Sigmoid colon (tissue), 7 donors: ENCODE measurements at regions of chr9 and their contacts with region 1.

Region 1: GRCh38 chr9:120936011-120936763 is 9.6 kb upstream of the TRAF1 start:
- DNase-seq: peak; percentile 97
- H3K4me3 ChIP-seq: peak overlapping the region in 3 of 4 donors; percentile 25 to 35 (median 28)
- H3K27ac ChIP-seq: peak overlapping the region; percentile 85 to 91 (median 88)
- H3K4me1 ChIP-seq: peaks cover 0 to 55% (median 43%) of the 10 kb centered on the region in 4 donors
- H3K27me3 ChIP-seq: no peaks in the 10 kb centered on the region
- CTCF ChIP-seq: peak; percentile 88 to 92 (median 90)
- EP300 ChIP-seq: peak in 1 of 4 donors; percentile 19
- POLR2A ChIP-seq: no peak

Region 2: DNA sequence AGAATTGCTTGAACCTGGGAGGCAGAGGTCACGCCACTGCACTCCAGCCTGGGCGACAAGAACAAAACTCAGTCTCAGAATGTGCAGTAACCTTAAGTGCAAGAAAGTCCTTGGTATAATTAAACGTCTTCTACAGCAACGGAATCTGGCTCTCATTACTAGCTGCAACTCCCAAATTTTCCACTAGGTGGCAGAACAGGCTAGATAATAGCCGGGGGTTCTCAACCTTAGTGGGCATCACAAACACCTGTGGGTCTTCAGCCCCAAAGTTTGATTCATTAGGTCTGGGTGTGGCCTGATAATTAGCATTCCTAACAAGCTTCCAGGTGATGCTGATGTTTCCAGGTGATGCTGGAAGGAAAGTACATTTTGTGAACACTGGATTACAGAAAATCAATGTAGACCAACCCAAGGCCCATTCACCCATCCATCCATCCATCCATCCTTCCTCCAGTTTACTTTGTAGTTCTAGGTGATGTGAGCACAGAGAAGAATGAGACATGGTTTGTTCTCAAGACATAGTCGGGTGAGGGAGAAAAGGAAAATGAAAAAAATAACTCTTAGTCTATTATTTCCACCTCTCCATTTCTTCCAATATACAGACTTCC is 180.3 kb before region 1 on chr9:
- intact Hi-C with region 1: loop called (anchors 1 kb)
- DNase-seq: no peak
- H3K4me3 ChIP-seq: no peak overlapping the region
- H3K27ac ChIP-seq: peak overlapping the region in 1 of 4 donors; percentile 24
- H3K4me1 ChIP-seq: peaks cover 0 to 12% (median 7%) of the 10 kb centered on the region in 4 donors
- H3K27me3 ChIP-seq: no peaks in the 10 kb centered on the region
- CTCF ChIP-seq: peak; percentile 65 to 92 (median 86)
- EP300 ChIP-seq: no peak
- POLR2A ChIP-seq: no peak

Region 3: DNA sequence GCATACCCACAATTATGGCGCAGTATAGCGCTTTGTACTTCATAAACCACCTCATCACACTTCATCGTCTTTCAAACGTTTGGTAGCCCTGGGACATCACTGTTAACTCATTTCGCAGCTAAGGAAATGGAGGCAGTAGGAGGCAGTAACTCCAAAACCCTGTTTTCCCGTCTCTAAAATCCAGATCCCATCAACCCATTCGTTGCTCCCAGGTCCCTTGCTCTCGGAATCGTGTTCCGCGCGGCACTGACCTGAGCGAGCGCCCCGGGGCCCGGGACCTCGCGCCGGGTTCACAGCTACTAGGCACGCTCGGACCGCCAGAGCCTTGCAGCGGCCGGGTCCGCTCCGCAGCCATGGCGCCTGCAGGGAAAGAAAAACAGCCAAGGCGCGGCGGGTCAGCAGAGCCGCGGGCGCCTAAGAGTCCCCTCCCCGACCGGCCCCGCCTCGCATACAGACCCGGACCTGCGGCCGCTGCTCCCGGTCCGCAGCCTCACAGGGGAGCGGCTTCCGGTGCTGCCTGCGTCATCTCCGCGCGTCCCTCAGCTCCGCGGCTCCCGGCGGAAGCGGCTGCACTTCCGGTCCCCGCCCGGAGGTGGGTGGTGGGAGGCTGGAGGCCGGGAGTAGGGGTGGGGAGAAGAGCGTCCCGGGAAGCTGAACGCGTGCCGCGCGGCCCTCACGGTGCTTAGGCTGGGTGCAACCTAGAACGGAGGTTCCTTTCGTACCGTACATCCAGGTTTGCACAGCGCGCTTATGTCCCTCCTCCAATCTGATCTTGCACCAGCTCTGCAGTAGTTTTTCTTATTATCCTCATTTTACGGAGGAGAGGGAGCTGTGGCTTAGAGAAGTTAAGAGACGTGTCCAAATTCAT is 143.1 kb before region 1 on chr9 and contains the start of gene FBXW2:
- intact Hi-C with region 1: loop called (anchors 2 kb)
- DNase-seq: peak; percentile 95
- H3K4me3 ChIP-seq: peak within 1 kb of the TSS; percentile 69 to 95 (median 90)
- H3K27ac ChIP-seq: peak within 1 kb of the TSS; percentile 86 to 94 (median 91)
- H3K4me1 ChIP-seq: peaks cover 0 to 39% (median 30%) of the 10 kb centered on the region in 4 donors
- H3K27me3 ChIP-seq: no peaks in the 10 kb centered on the region
- CTCF ChIP-seq: peak in 1 of 4 experiments; percentile 31
- EP300 ChIP-seq: peak in 1 of 4 donors; percentile 35
- POLR2A ChIP-seq: peak; percentile 91 to 94
- total RNA-seq, gene FBXW2: 30.9 to 61.8 (median 36.3) TPM

Region 4: GRCh38 chr9:120842690-120843499 is 93.3 kb before region 1 on chr9 and contains the start of gene PSMD5:
- intact Hi-C with region 1: loop called (anchors 1 kb)
- DNase-seq: peak; percentile 100
- H3K4me3 ChIP-seq: peak within 1 kb of the TSS; percentile 69 to 85 (median 73)
- H3K27ac ChIP-seq: peak within 1 kb of the TSS; percentile 90 to 98 (median 94)
- H3K4me1 ChIP-seq: peaks cover 0 to 47% (median 42%) of the 10 kb centered on the region in 4 donors
- H3K27me3 ChIP-seq: no peaks in the 10 kb centered on the region
- CTCF ChIP-seq: no peak
- EP300 ChIP-seq: peak in 2 of 4 donors; percentile 40 to 71
- POLR2A ChIP-seq: peak; percentile 73 to 88
- total RNA-seq, gene PSMD5: 28.6 to 42.6 (median 37.8) TPM

Region 5: GRCh38 chr9:120868676-120869359 is 67.4 kb before region 1 on chr9:
- intact Hi-C with region 1: loop called (anchors 2 kb)
- DNase-seq: peak; percentile 98
- H3K4me3 ChIP-seq: peak overlapping the region; percentile 47 to 60 (median 57)
- H3K27ac ChIP-seq: peak overlapping the region; percentile 85 to 93 (median 88)
- H3K4me1 ChIP-seq: peaks cover 0 to 20% (median 13%) of the 10 kb centered on the region in 4 donors
- H3K27me3 ChIP-seq: no peaks in the 10 kb centered on the region
- CTCF ChIP-seq: peak in 2 of 4 experiments; percentile 20 to 36
- EP300 ChIP-seq: no peak
- POLR2A ChIP-seq: peak; percentile 17 to 75

Region 6: GRCh38 chr9:120875954-120876841 is 60.0 kb before region 1 on chr9:
- intact Hi-C with region 1: loop called (anchors 2 kb)
- DNase-seq: peak; percentile 94
- H3K4me3 ChIP-seq: peak overlapping the region; percentile 73 to 86 (median 80)
- H3K27ac ChIP-seq: peak overlapping the region; percentile 94 to 99 (median 96)
- H3K4me1 ChIP-seq: peaks cover 0 to 16% (median 14%) of the 10 kb centered on the region in 4 donors
- H3K27me3 ChIP-seq: no peaks in the 10 kb centered on the region
- CTCF ChIP-seq: peak in 1 of 4 experiments; percentile 13
- EP300 ChIP-seq: no peak
- POLR2A ChIP-seq: peak in 1 of 2 donors; percentile 24

Region 7: GRCh38 chr9:120892748-120893610 is 43.2 kb before region 1 on chr9:
- intact Hi-C with region 1: loop called (anchors 1 kb)
- DNase-seq: no peak
- H3K4me3 ChIP-seq: no peak overlapping the region
- H3K27ac ChIP-seq: peak overlapping the region; percentile 7 to 86 (median 74)
- H3K4me1 ChIP-seq: peaks cover 0 to 18% (median 13%) of the 10 kb centered on the region in 4 donors
- H3K27me3 ChIP-seq: no peaks in the 10 kb centered on the region
- CTCF ChIP-seq: no peak
- EP300 ChIP-seq: no peak
- POLR2A ChIP-seq: no peak

Region 8: GRCh38 chr9:121156263-121156731 is 220.1 kb after region 1 on chr9:
- intact Hi-C with region 1: no loop called
- DNase-seq: no peak
- H3K4me3 ChIP-seq: no peak overlapping the region
- H3K27ac ChIP-seq: peak overlapping the region in 1 of 4 donors; percentile 53
- H3K4me1 ChIP-seq: no peaks in the 10 kb centered on the region
- H3K27me3 ChIP-seq: no peaks in the 10 kb centered on the region
- CTCF ChIP-seq: no peak
- EP300 ChIP-seq: no peak
- POLR2A ChIP-seq: no peak

Region 9: GRCh38 chr9:122940603-122941559 is 2004.7 kb after region 1 on chr9 and contains the start of gene RABGAP1:
- intact Hi-C with region 1: no loop called
- DNase-seq: peak; percentile 100
- H3K4me3 ChIP-seq: peak within 1 kb of the TSS; percentile 72 to 86 (median 80)
- H3K27ac ChIP-seq: peak within 1 kb of the TSS; percentile 92 to 97 (median 94)
- H3K4me1 ChIP-seq: peaks cover 0 to 48% (median 34%) of the 10 kb centered on the region in 4 donors
- H3K27me3 ChIP-seq: no peaks in the 10 kb centered on the region
- CTCF ChIP-seq: no peak
- EP300 ChIP-seq: peak in 1 of 4 donors; percentile 32
- POLR2A ChIP-seq: peak; percentile 76 to 81
- total RNA-seq, gene RABGAP1: 90.6 to 110 (median 98.9) TPM